ENCODE measurements at regions of chr4 and their contacts with region 1.

Region 1: GRCh38 chr4:80731996-80732395 is 298.5 kb upstream of the BMP3 start:
- DNase-seq: peak; percentile 92
- ATAC-seq: peak; percentile 71
- H3K4me3 ChIP-seq: no peak overlapping the region
- H3K27ac ChIP-seq: peak overlapping the region; percentile 73
- H3K4me1 ChIP-seq: peaks cover 14% of the 10 kb centered on the region
- H3K27me3 ChIP-seq: no peaks in the 10 kb centered on the region
- CTCF ChIP-seq: no peak

Region 2: GRCh38 chr4:80637190-80637589 is 94.8 kb before region 1 on chr4:
- CTCF ChIA-PET with region 1: no interaction called
- POLR2A ChIA-PET with region 1: no interaction called
- intact Hi-C with region 1: no loop called
- DNase-seq: no peak
- ATAC-seq: no peak
- H3K4me3 ChIP-seq: no peak overlapping the region
- H3K27ac ChIP-seq: no peak overlapping the region
- H3K4me1 ChIP-seq: no peaks in the 10 kb centered on the region
- H3K27me3 ChIP-seq: no peaks in the 10 kb centered on the region
- CTCF ChIP-seq: no peak

Region 3: DNA sequence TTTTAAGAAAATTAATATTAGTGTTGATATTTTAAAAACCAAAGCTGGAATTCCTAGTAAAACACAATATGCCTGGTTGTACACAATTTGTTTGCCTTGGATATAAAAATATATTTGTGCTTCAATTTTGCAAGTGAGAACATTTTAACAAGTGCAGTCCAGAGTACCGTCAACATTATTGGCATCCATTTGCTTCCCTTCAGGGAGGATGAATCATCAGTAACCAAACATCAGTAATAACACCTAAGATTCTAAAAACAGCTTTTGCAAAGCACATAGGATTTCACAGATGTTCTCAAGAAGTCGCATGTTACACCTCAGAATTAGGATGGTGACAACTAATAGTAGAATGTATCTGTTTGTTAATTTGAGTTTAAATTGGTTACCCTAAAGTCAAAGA is 35.9 kb after region 1 on chr4:
- CTCF ChIA-PET with region 1: no interaction called
- POLR2A ChIA-PET with region 1: no interaction called
- intact Hi-C with region 1: no loop called
- DNase-seq: peak; percentile 61
- ATAC-seq: peak; percentile 81
- H3K4me3 ChIP-seq: no peak overlapping the region
- H3K27ac ChIP-seq: no peak overlapping the region
- H3K4me1 ChIP-seq: peaks cover 14% of the 10 kb centered on the region; the same call in 1 of the 2 replicates
- H3K27me3 ChIP-seq: no peaks in the 10 kb centered on the region
- CTCF ChIP-seq: no peak

Region 4: GRCh38 chr4:81021142-81021944 is 289.3 kb after region 1 on chr4:
- CTCF ChIA-PET with region 1: no interaction called
- POLR2A ChIA-PET with region 1: no interaction called
- intact Hi-C with region 1: loop called (anchors 1 kb)
- DNase-seq: peak; percentile 94
- ATAC-seq: peak; percentile 76
- H3K4me3 ChIP-seq: peak overlapping the region; percentile 26; the same call in 1 of the 2 replicates
- H3K27ac ChIP-seq: peak overlapping the region; percentile 96
- H3K4me1 ChIP-seq: peaks cover 44% of the 10 kb centered on the region
- H3K27me3 ChIP-seq: no peaks in the 10 kb centered on the region
- CTCF ChIP-seq: no peak